ENCODE measurements at regions of chr2 and their contacts with region 1.

Region 1: GRCh38 chr2:86440631-86441391 is at the start of gene KDM3A:
- DNase-seq: peak; percentile 100
- H3K4me3 Mint-ChIP-seq: peak within 1 kb of the TSS; percentile 92
- H3K27ac Mint-ChIP-seq: peak within 1 kb of the TSS; percentile 99
- H3K4me1 Mint-ChIP-seq: peaks cover 43% of the 10 kb centered on the region
- H3K27me3 Mint-ChIP-seq: peaks cover 6% of the 10 kb centered on the region
- total RNA-seq, gene KDM3A: 81.9 to 91.8 TPM

Region 2: DNA sequence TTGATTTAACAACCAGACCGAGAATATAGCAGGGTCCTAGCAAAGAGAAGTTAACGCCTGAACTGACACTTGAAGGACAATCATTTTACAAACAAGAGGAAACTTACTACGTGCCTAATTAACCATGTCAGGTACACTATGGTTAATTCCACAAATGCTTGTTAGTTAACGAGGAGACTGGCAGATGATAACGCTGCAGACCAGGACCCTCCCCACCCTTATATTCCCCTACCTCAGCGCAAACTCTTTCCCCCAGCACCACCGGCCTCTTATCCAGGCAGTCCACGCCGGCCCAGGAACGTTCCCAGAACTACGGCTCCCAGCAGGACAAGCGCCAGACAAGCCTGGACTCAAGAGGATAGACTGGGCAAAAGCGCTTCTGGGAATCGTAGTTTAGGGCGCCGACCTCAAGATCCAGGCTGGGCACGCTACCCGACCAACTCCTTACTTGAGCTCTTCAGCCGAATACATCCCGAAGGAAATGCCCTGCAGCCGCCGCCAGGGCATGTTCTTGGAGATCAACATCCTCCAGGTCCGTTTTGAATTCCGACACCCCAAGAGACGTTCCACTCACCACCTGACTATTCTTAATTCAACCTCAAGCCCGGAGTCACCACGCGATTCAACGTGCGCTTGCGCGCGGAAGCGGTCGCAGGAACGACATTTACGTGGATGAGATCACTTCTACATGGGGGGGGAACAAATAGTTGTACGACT is 335.4 kb before region 1 on chr2 and contains the start of gene POLR1A:
- CTCF ChIA-PET with region 1: no interaction called
- POLR2A ChIA-PET with region 1: interaction called, 11 read pairs
- DNase-seq: peak; percentile 89
- H3K4me3 Mint-ChIP-seq: peak within 1 kb of the TSS; percentile 80
- H3K27ac Mint-ChIP-seq: peak within 1 kb of the TSS; percentile 92
- H3K4me1 Mint-ChIP-seq: peaks cover 58% of the 10 kb centered on the region
- H3K27me3 Mint-ChIP-seq: no peaks in the 10 kb centered on the region
- total RNA-seq, gene POLR1A: 25.2 to 29.7 TPM

Region 3: DNA sequence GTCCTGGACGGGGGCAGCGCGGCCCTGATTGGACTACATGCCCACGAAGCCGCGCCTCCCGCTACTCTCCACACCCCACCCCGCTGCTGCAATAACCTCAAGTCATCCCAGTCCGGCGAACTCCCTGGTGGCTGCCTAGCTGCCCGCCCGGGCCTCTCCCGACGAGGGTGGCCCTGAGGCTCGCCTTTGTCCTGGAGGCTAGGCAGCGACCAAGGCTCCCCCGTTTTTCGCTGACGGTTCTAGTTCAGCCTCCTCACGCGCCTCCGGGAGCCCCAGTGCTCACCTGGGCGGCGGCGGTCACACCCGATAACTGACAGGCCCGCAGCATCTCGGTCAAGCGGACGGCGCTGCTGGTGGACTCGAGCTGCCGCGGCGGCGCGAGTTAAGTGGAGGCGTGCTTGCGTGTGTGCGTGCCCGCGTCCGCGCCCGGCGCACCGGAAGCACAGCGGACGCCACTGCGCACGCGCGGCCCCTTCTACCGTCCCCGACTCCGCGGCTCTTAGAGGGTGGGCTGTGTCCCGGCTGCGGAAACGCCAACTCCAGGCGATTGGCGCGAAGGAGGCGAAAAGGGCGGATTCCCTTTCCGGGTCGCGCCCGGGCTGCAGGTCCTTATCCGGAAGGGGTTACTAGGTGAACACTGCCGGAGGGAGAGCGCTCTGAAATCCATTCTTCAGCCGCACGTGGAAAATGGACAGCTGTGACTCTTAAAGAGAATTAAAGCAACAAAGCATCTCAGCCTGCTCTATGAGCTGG is 245.6 kb before region 1 on chr2 and contains the start of gene IMMT:
- CTCF ChIA-PET with region 1: no interaction called
- POLR2A ChIA-PET with region 1: interaction called, 32 read pairs
- DNase-seq: peak; percentile 94
- H3K4me3 Mint-ChIP-seq: peak within 1 kb of the TSS; percentile 94
- H3K27ac Mint-ChIP-seq: peak within 1 kb of the TSS; percentile 90
- H3K4me1 Mint-ChIP-seq: peaks cover 58% of the 10 kb centered on the region
- H3K27me3 Mint-ChIP-seq: no peaks in the 10 kb centered on the region
- total RNA-seq, gene IMMT: 144 to 147 TPM

Region 4: GRCh38 chr2:86221066-86221684 is 219.6 kb before region 1 on chr2:
- CTCF ChIA-PET with region 1: interaction called, 10 read pairs
- POLR2A ChIA-PET with region 1: interaction called, 11 read pairs
- DNase-seq: peak; percentile 72
- H3K4me3 Mint-ChIP-seq: no peak overlapping the region
- H3K27ac Mint-ChIP-seq: no peak overlapping the region
- H3K4me1 Mint-ChIP-seq: peaks cover 46% of the 10 kb centered on the region
- H3K27me3 Mint-ChIP-seq: no peaks in the 10 kb centered on the region

Region 5: DNA sequence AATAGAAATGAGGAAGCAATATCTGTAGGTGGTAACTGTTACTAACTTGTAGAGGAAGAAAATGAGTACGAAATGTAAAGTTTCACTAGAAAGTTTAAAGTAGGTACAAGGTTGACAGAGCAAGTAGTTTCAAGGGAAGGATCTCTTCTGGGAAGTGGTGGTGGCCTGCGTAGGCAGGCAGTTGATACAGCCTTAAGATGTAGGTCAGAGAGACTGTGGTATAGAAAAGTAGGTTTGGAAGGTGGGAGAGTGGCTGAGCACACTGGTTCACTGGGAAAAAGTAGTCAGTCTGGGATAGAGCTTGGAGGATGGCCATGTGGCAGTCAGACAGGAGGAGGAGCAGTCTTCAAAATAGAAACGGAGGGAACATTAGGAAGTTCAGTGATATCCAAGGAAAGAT is 23.8 kb after region 1 on chr2:
- CTCF ChIA-PET with region 1: interaction called, 20 read pairs
- POLR2A ChIA-PET with region 1: interaction called, 122 read pairs
- DNase-seq: no peak
- H3K4me3 Mint-ChIP-seq: no peak overlapping the region
- H3K27ac Mint-ChIP-seq: peak overlapping the region; percentile 47
- H3K4me1 Mint-ChIP-seq: peaks cover 50% of the 10 kb centered on the region
- H3K27me3 Mint-ChIP-seq: no peaks in the 10 kb centered on the region

Region 6: GRCh38 chr2:86562922-86563649 is 122.3 kb after region 1 on chr2 and contains the start of gene CHMP3:
- CTCF ChIA-PET with region 1: interaction called, 3 read pairs
- POLR2A ChIA-PET with region 1: interaction called, 45 read pairs
- DNase-seq: peak; percentile 96
- H3K4me3 Mint-ChIP-seq: peak within 1 kb of the TSS; percentile 95
- H3K27ac Mint-ChIP-seq: peak within 1 kb of the TSS; percentile 97
- H3K4me1 Mint-ChIP-seq: peaks cover 44% of the 10 kb centered on the region
- H3K27me3 Mint-ChIP-seq: peaks cover under 1% of the 10 kb centered on the region
- total RNA-seq, gene CHMP3: 39.1 to 41.5 TPM

Region 7: DNA sequence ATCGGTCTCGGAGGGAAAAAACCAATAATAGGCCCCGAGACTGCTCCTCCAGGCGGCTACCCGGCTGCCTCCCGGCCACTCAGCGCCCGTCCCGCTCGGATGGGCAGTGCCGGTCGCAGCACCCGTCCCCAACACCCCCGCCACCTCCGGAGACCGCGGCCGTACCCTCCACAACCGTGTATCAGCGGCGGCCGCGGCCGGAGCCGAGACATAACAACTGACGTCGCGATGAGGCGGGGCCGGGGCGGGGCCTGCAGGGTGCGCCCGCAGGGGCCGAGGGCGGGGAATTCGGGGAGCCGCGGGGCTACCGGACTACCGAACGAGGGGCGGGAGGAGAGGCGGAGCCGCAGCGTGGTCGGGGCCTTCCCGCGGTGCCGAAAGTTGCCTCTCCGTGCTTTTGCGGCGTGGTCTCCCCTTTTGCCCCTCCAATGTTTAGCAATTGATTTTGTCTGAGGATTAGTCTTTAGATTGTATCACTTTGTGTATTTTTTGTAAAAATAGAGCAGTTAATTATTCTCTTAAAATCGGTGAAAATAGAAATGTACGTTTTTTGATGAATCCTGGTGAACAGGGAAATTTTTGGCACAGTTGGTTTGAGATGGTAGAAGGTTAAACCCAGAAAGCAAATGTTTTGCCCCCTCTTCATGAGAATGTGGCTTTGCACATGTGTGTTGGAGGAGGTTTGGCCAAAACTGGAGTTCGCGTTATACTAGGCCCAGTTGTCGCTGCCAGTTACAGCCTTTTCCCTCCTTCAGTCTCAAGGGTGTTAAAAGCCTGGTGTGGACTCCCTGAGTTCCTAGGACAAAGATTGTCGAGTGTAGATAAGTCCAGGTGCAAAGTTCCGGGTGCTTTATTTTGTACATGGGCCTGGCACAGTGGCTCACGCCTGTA is 183.1 kb after region 1 on chr2 and contains the start of gene RNF103:
- CTCF ChIA-PET with region 1: interaction called, 3 read pairs
- POLR2A ChIA-PET with region 1: interaction called, 60 read pairs
- DNase-seq: peak; percentile 91
- H3K4me3 Mint-ChIP-seq: peak within 1 kb of the TSS; percentile 90
- H3K27ac Mint-ChIP-seq: peak within 1 kb of the TSS; percentile 95
- H3K4me1 Mint-ChIP-seq: peaks cover 19% of the 10 kb centered on the region
- H3K27me3 Mint-ChIP-seq: peaks cover 23% of the 10 kb centered on the region
- total RNA-seq, gene RNF103: 18.9 to 19.9 TPM